Ascending aorta (tissue), 2 donors: ENCODE measurements at regions of chr4 and their contacts with region 1.

Region 1: DNA sequence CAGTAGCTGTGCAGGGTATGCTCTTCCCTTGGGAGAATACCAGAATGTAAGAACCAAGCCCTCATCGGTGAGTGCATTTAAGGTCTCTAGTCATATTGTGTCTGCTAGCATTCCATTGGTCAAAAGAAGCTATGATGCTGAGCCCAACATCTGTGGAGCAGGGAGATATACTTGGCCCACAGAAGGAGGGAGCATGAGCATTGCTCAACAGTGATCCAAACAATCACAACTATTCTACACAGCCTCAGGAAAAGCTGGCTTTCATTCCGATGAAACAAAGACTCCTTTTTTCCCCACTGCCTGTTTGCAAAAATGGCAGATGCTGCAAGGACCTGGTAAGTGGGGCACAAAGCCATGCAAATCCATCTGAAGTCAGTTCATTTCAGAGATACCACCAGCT is 80.6 kb upstream of the DHX15 start:
- DNase-seq: no peak
- H3K4me3 ChIP-seq: no peak overlapping the region
- H3K27ac ChIP-seq: no peak overlapping the region
- H3K4me1 ChIP-seq: no peaks in the 10 kb centered on the region
- H3K27me3 ChIP-seq: no peaks in the 10 kb centered on the region
- CTCF ChIP-seq: no peak

Region 2: GRCh38 chr4:25564836-25565235 is 899.9 kb after region 1 on chr4:
- intact Hi-C with region 1: loop called (anchors 5 kb)
- DNase-seq: no peak
- H3K4me3 ChIP-seq: no peak overlapping the region
- H3K27ac ChIP-seq: no peak overlapping the region
- H3K4me1 ChIP-seq: no peaks in the 10 kb centered on the region
- H3K27me3 ChIP-seq: no peaks in the 10 kb centered on the region
- CTCF ChIP-seq: no peak